ENCODE measurements at regions of chr7 and their contacts with region 1.

Region 1: GRCh38 chr7:69739931-69740431 is 141.7 kb downstream of the AUTS2 start:
- DNase-seq: peak; percentile 18
- ATAC-seq: peak; percentile 56
- H3K4me3 Mint-ChIP-seq: peak overlapping the region; percentile 33
- H3K27ac Mint-ChIP-seq: peak overlapping the region; percentile 82
- H3K4me1 Mint-ChIP-seq: peaks cover 27% of the 10 kb centered on the region
- H3K27me3 Mint-ChIP-seq: no peaks in the 10 kb centered on the region
- CTCF ChIP-seq: no peak

Region 2: GRCh38 chr7:69598081-69598486 is 141.9 kb before region 1 on chr7 and contains the start of gene AUTS2:
- CTCF ChIA-PET with region 1: no interaction called
- POLR2A ChIA-PET with region 1: interaction called, 3 read pairs
- intact Hi-C with region 1: loop called (anchors 1 kb)
- DNase-seq: peak; percentile 78
- ATAC-seq: peak; percentile 75
- H3K4me3 Mint-ChIP-seq: peak within 1 kb of the TSS; percentile 93
- H3K27ac Mint-ChIP-seq: peak within 1 kb of the TSS; percentile 83
- H3K4me1 Mint-ChIP-seq: peaks cover 16% of the 10 kb centered on the region
- H3K27me3 Mint-ChIP-seq: no peaks in the 10 kb centered on the region
- CTCF ChIP-seq: no peak
- total RNA-seq, gene AUTS2: 13.0 and 15.9 TPM in 2 replicates

Region 3: DNA sequence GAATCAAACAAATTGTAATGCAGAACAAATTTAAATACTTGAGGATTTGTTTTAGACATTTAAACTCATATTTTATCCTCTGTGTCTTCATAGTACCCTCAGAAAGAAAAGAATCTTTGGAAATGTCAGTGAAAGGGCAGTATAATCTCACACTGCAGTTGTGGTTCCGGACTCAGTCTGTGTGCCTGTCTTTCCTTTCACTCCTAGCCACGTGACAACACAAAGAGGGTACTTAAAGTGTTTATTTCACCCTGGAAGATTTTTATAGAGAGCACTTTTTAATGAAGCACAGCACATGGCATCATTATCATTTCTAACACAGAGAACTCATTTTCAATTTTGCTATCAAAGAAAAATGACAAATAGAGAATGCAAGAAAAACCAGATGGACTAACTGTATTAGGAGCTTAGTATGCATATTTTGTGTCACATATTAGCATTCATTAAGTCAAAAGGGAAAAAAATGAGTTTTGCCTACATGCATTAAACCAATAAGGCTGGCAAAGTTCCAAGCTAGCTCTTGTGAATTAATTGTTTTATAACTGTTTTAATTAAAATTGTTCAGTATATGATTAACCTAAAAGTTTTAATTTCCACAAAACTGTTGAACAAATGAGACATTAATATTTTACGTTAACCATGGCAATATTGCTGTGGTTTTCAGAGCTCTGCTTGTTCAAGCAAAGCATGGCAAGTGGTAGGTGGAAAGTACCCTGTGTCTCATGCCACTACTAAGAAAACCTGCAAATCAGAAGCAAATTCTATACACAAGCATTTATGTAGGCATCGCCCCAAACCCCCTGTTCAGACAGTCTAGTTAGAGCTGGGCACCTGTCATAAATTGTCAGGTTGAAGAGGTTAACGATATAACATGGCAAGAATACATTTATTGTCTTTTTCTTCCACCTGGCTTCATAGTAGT is 75.8 kb before region 1 on chr7:
- CTCF ChIA-PET with region 1: no interaction called
- POLR2A ChIA-PET with region 1: interaction called, 3 read pairs
- intact Hi-C with region 1: loop called (anchors 5 kb)
- DNase-seq: no peak
- ATAC-seq: peak; percentile 91
- H3K4me3 Mint-ChIP-seq: peak overlapping the region; percentile 45
- H3K27ac Mint-ChIP-seq: peak overlapping the region; percentile 76
- H3K4me1 Mint-ChIP-seq: peaks cover 39% of the 10 kb centered on the region
- H3K27me3 Mint-ChIP-seq: no peaks in the 10 kb centered on the region
- CTCF ChIP-seq: no peak

Region 4: DNA sequence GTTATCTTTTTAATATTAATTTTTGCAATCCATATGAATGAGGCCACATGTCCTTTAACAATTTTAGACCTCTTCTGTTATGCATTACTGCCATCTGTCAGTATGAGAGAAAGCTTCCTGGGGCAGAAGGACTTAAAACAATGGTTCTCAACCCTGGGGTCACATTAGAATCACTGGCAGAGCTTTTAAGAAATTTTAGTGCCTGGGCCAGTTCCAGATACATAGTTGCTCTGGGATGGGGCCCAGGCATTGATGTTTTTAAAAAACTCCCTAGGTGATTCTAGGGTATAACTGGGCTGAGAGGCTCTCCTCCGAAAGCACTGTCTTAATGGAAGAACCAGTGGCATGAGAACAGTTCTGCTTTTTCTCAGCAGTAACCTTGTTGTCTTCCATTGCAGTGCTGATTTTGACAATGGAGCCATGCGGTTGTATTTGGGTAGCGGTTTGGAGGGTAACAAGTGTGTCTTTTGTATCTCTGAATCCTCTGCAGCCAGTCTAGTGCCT is 85.2 kb after region 1 on chr7:
- CTCF ChIA-PET with region 1: interaction called, 4 read pairs
- POLR2A ChIA-PET with region 1: interaction called, 34 read pairs
- intact Hi-C with region 1: loop called (anchors 1 kb)
- DNase-seq: no peak
- ATAC-seq: peak; percentile 18
- H3K4me3 Mint-ChIP-seq: peak overlapping the region; percentile 90
- H3K27ac Mint-ChIP-seq: peak overlapping the region; percentile 96
- H3K4me1 Mint-ChIP-seq: peaks cover 72% of the 10 kb centered on the region
- H3K27me3 Mint-ChIP-seq: no peaks in the 10 kb centered on the region
- CTCF ChIP-seq: no peak

Region 5: GRCh38 chr7:69893906-69894305 is 153.9 kb after region 1 on chr7:
- CTCF ChIA-PET with region 1: interaction called, 4 read pairs
- POLR2A ChIA-PET with region 1: no interaction called
- intact Hi-C with region 1: loop called (anchors 2 kb)
- DNase-seq: no peak
- ATAC-seq: peak; percentile 34
- H3K4me3 Mint-ChIP-seq: no peak overlapping the region
- H3K27ac Mint-ChIP-seq: no peak overlapping the region
- H3K4me1 Mint-ChIP-seq: peaks cover 32% of the 10 kb centered on the region
- H3K27me3 Mint-ChIP-seq: no peaks in the 10 kb centered on the region
- CTCF ChIP-seq: no peak